ENCODE measurements at regions of chr3 and their contacts with region 1.

Region 1: GRCh38 chr3:38843898-38844297 is 27.9 kb upstream of the SCN10A start:
- DNase-seq: peak; percentile 71
- H3K4me3 ChIP-seq: no peak overlapping the region
- H3K27ac ChIP-seq: no peak overlapping the region
- H3K4me1 ChIP-seq: no peaks in the 10 kb centered on the region
- H3K27me3 ChIP-seq: peaks cover 0 to 5% of the 10 kb centered on the region in 2 experiments
- CTCF ChIP-seq: peak; percentile 52 to 56
- POLR2A ChIP-seq: no peak

Region 2: DNA sequence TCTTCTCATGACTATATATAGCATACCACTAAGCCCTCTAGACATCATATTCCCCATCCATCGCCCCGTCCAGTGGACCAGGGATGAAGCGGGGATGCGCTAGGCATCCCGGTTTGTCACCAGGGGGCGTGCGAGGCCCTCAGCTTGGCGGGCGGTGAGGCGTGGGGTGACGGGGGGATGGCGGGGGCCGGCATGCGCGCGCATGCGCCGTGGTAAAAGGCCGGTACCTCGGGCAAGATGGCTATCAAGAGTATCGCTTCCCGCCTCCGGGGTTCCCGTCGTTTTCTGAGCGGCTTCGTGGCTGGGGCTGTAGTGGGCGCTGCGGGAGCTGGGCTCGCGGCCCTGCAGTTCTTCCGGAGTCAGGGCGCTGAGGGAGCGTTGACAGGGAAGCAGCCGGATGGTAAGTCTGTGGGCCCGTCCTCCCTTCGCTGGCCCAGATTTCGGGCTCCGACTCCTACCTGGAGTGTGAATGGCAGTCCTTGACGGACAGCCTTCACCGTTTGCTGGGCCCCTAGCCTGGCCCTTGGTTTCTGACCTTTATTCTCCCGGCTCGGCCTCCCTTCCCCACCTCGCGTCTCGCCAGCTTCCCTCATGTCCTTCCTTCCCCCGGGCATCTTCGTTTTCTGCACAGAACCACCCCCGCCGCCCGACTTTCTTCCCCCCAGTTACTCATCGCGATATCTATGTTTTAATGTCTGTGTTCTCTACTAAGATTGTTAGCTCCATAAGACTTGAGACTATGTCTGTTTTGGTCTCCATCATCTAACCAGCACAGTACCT is 347.6 kb before region 1 on chr3 and contains the start of gene EXOG:
- CTCF ChIA-PET with region 1: interaction called, 16 read pairs
- POLR2A ChIA-PET with region 1: no interaction called
- dilution Hi-C with region 1: no loop called
- intact Hi-C with region 1: loop called (anchors 1 kb)
- DNase-seq: peak; percentile 93
- H3K4me3 ChIP-seq: peak within 1 kb of the TSS; percentile 73 to 84 (median 80)
- H3K27ac ChIP-seq: peak within 1 kb of the TSS; percentile 4
- H3K4me1 ChIP-seq: peaks cover 7% of the 10 kb centered on the region
- H3K27me3 ChIP-seq: no peaks in the 10 kb centered on the region
- CTCF ChIP-seq: peak; percentile 84 to 94
- POLR2A ChIP-seq: peak; percentile 77
- total RNA-seq, gene EXOG: 21.8 and 21.9 TPM in 2 replicates

Region 3: DNA sequence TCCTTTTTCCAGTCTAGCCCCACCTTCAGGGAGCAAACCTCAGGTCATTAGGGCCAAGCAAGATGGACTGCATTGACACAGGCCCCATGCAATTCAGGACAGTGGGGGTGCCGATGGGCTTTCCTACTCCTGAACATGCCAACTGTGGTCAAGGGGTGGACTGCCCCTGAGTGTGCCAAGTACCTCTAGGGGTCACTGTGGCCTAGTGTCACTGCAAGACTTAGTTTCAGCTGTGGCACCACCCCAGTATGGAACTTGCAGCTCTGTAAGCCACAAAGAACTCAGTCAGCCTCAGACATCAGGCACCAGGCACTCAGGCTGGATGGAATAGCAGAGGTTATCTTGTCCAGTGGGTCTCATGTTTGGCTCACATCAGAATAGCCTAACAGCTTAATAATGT is 315.4 kb before region 1 on chr3:
- CTCF ChIA-PET with region 1: interaction called, 124 read pairs
- POLR2A ChIA-PET with region 1: no interaction called
- dilution Hi-C with region 1: no loop called
- intact Hi-C with region 1: loop called (anchors 2 kb)
- DNase-seq: no peak
- H3K4me3 ChIP-seq: no peak overlapping the region
- H3K27ac ChIP-seq: no peak overlapping the region
- H3K4me1 ChIP-seq: no peaks in the 10 kb centered on the region
- H3K27me3 ChIP-seq: no peaks in the 10 kb centered on the region
- CTCF ChIP-seq: no peak
- POLR2A ChIP-seq: no peak

Region 4: GRCh38 chr3:38538773-38539353 is 305.0 kb before region 1 on chr3:
- CTCF ChIA-PET with region 1: no interaction called
- POLR2A ChIA-PET with region 1: no interaction called
- dilution Hi-C with region 1: no loop called
- intact Hi-C with region 1: no loop called
- DNase-seq: no peak
- H3K4me3 ChIP-seq: no peak overlapping the region
- H3K27ac ChIP-seq: no peak overlapping the region
- H3K4me1 ChIP-seq: no peaks in the 10 kb centered on the region
- H3K27me3 ChIP-seq: no peaks in the 10 kb centered on the region
- CTCF ChIP-seq: no peak
- POLR2A ChIP-seq: no peak

Region 5: DNA sequence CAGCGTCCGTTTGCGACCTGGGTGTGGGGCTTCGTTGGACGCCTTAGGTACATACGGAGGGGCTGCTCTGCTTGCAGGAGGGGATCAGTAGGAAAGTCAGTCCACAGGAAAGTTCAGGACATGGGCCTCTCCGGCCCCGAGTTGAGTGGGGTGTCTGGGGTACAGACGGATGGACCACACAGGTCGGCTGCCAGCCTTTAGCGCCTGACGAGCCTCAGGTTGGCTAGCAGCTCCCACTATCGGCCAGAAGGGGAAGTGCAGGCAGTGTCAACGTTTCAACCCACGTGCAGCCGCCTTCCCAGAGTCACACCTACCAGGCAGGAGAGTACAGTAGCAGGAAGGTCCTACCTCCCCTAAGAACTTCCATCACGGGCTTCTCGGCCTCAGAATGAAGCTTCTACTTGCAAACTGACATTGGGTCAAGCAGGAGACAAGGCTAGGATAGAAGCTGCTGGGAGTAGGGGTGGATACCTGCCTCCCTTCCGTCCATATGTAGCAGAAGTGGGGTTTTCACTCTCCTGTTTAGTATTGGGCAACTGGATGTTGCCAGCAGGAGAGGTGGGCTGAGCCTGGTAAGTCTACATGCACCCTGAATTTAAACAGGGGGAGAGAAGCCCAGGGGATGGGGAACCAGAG is 192.6 kb before region 1 on chr3:
- CTCF ChIA-PET with region 1: interaction called, 62 read pairs
- POLR2A ChIA-PET with region 1: no interaction called
- dilution Hi-C with region 1: no loop called
- intact Hi-C with region 1: loop called (anchors 1 kb)
- DNase-seq: peak; percentile 71
- H3K4me3 ChIP-seq: no peak overlapping the region
- H3K27ac ChIP-seq: no peak overlapping the region
- H3K4me1 ChIP-seq: peaks cover 10% of the 10 kb centered on the region
- H3K27me3 ChIP-seq: no peaks in the 10 kb centered on the region
- CTCF ChIP-seq: peak; percentile 93 to 100
- POLR2A ChIP-seq: no peak

Region 6: DNA sequence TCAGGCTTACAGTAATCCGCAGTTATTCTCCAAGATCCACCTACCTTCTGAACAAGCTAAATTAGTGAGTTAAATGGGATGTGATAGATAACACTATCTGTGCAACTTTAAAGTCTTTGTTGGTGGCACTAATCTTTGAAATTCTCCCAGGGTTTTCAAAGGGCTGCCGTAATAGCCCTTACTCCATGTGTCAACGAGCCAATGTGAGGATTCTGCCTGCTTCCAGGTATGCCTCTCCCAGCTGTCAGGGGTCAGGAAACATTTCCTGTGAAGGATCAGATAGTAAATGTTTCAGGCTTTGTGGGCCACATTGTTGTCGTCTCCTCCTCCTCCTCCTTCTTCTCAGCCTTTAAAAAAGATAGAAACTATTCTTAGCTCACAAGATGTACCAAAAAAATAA is 174.2 kb before region 1 on chr3:
- CTCF ChIA-PET with region 1: interaction called, 26 read pairs
- POLR2A ChIA-PET with region 1: no interaction called
- dilution Hi-C with region 1: no loop called
- intact Hi-C with region 1: no loop called
- DNase-seq: no peak
- H3K4me3 ChIP-seq: no peak overlapping the region
- H3K27ac ChIP-seq: no peak overlapping the region
- H3K4me1 ChIP-seq: no peaks in the 10 kb centered on the region
- H3K27me3 ChIP-seq: peaks cover 4 to 15% of the 10 kb centered on the region in 2 experiments
- CTCF ChIP-seq: no peak
- POLR2A ChIP-seq: no peak

Region 7: DNA sequence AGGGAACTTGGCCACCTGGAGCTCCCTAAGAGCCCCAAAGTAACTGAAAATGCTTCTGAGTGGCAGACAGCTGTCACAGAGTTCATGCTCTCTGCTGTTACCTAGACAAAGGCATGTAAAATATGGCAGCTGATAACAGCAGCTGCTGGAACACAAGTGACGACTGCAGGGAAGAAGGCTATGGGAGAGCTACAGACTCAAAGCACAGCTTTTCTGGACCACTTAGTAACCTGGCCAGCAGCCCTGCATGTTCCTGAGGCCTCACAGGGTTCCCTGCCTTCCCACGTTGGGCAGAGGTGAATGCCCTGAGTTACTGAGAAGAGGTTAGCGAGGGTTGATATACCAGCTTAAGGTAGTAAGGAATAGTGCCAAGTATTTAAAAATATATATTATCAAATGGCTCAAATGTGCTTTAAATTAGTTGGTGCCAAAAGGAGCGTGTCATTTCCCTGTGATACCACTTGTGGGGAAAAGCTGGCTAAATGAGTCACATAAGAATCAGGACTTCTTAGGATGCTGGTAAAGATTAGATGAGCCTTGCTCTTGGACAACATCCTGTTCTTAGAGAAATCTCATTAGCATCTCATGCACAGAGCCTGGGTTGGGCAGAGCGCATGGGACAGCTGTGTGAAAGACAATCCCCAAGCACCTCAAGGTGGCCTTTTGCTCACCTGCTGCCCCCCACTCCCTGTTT is 118.0 kb before region 1 on chr3:
- CTCF ChIA-PET with region 1: interaction called, 19 read pairs
- POLR2A ChIA-PET with region 1: no interaction called
- dilution Hi-C with region 1: no loop called
- intact Hi-C with region 1: no loop called
- DNase-seq: peak; percentile 84
- H3K4me3 ChIP-seq: no peak overlapping the region
- H3K27ac ChIP-seq: peak overlapping the region; percentile 95
- H3K4me1 ChIP-seq: peaks cover 78% of the 10 kb centered on the region
- H3K27me3 ChIP-seq: no peaks in the 10 kb centered on the region
- CTCF ChIP-seq: no peak
- POLR2A ChIP-seq: no peak

Region 8: GRCh38 chr3:38805765-38806386 is 38.0 kb before region 1 on chr3:
- CTCF ChIA-PET with region 1: interaction called, 19 read pairs
- POLR2A ChIA-PET with region 1: no interaction called
- dilution Hi-C with region 1: no loop called
- intact Hi-C with region 1: no loop called
- DNase-seq: peak; percentile 74
- H3K4me3 ChIP-seq: no peak overlapping the region
- H3K27ac ChIP-seq: no peak overlapping the region
- H3K4me1 ChIP-seq: no peaks in the 10 kb centered on the region
- H3K27me3 ChIP-seq: peaks cover 0 to 7% of the 10 kb centered on the region in 2 experiments
- CTCF ChIP-seq: no peak
- POLR2A ChIP-seq: no peak

Region 9: DNA sequence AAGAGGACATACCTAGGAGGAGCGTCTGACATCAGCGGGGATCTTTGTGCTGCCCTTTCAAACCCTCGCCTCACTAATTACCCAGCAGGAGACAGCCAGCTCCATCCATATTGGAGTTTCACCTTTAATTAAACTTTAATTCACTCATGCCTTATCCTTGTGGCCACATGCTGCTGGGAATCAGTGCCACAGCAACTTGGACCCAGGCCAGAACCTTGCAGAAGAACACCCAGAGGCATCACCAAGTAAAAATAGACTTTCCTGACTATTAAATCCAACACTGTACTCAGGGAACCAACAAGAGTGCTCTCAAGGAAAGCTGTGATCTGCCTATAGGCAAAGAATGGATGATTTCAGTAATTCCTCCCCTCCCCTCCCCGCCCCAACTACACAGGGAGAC is 1489.5 kb after region 1 on chr3:
- CTCF ChIA-PET with region 1: no interaction called
- POLR2A ChIA-PET with region 1: no interaction called
- dilution Hi-C with region 1: no loop called
- intact Hi-C with region 1: no loop called
- DNase-seq: no peak
- H3K4me3 ChIP-seq: no peak overlapping the region
- H3K27ac ChIP-seq: no peak overlapping the region
- H3K4me1 ChIP-seq: no peaks in the 10 kb centered on the region
- H3K27me3 ChIP-seq: peaks cover 0 to 6% of the 10 kb centered on the region in 2 experiments
- CTCF ChIP-seq: no peak
- POLR2A ChIP-seq: no peak